Transverse colon (tissue), 4 donors: ENCODE measurements at regions of chr14 and their contacts with region 1.

Region 1: GRCh38 chr14:34722717-34723545 is 8.5 kb upstream of the CFL2 start:
- DNase-seq: peak; percentile 27
- H3K4me3 ChIP-seq: no peak overlapping the region
- H3K27ac ChIP-seq: no peak overlapping the region
- H3K4me1 ChIP-seq: no peaks in the 10 kb centered on the region
- H3K27me3 ChIP-seq: no peaks in the 10 kb centered on the region
- CTCF ChIP-seq: peak; percentile 73 to 88 (median 76)
- EP300 ChIP-seq: no peak
- POLR2A ChIP-seq: no peak

Region 2: DNA sequence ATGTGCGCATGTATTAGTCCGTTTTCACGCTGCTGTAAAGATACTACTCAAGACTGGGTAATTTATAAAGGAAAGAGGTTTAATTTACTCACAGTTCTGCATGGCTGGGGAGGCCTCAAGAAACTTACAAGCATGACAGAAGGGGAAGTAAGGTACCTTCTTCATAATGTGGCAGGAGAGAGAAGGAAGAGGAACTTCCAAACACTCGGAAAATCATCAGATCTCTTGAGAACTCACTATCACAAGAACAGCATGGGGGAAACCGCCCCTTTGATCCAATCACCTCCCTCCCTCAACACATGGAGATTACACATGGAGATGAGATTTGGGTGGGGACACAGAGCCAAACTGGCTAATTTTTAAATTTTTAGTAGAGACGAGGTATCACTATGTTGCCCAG is 51.2 kb before region 1 on chr14:
- in situ Hi-C with region 1: loop called in 3 of 4 experiments (anchors 5 to 10 kb)
- intact Hi-C with region 1: loop called (anchors 5 kb)
- DNase-seq: no peak
- H3K4me3 ChIP-seq: no peak overlapping the region
- H3K27ac ChIP-seq: no peak overlapping the region
- H3K4me1 ChIP-seq: no peaks in the 10 kb centered on the region
- H3K27me3 ChIP-seq: no peaks in the 10 kb centered on the region
- CTCF ChIP-seq: no peak
- EP300 ChIP-seq: no peak
- POLR2A ChIP-seq: no peak

Region 3: GRCh38 chr14:34678306-34678705 is 44.6 kb before region 1 on chr14:
- in situ Hi-C with region 1: loop called in 3 of 4 experiments (anchors 5 to 10 kb)
- intact Hi-C with region 1: loop called (anchors 5 kb)
- DNase-seq: no peak
- H3K4me3 ChIP-seq: no peak overlapping the region
- H3K27ac ChIP-seq: no peak overlapping the region
- H3K4me1 ChIP-seq: peaks cover 0 to 3% (median 0%) of the 10 kb centered on the region in 4 donors
- H3K27me3 ChIP-seq: no peaks in the 10 kb centered on the region
- CTCF ChIP-seq: no peak
- EP300 ChIP-seq: no peak
- POLR2A ChIP-seq: no peak

Region 4: DNA sequence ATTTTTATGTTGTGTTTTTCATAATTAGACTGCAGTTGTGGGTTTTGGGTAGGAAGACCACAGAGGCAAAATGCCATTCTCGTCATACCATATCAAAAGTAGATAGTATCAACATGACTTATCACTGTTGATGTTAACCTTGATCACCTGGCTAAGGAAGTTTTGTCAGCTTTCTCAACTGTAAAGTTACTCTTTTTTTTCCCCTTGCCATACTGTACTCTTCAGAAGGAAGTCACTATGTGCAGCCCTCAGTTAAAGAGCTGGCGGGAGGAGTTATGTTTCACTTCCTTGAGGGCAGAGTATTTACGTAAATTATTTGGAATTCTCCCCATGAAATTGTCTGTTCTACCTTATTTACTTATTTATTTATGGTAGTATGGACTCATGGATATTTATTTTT is 478.1 kb after region 1 on chr14:
- in situ Hi-C with region 1: no loop called
- intact Hi-C with region 1: no loop called
- DNase-seq: no peak
- H3K4me3 ChIP-seq: no peak overlapping the region
- H3K27ac ChIP-seq: no peak overlapping the region
- H3K4me1 ChIP-seq: no peaks in the 10 kb centered on the region
- H3K27me3 ChIP-seq: no peaks in the 10 kb centered on the region
- CTCF ChIP-seq: no peak
- EP300 ChIP-seq: no peak
- POLR2A ChIP-seq: no peak